GM13977 (cell line): ENCODE measurements at regions of chr1 and their contacts with region 1.

Region 1: DNA sequence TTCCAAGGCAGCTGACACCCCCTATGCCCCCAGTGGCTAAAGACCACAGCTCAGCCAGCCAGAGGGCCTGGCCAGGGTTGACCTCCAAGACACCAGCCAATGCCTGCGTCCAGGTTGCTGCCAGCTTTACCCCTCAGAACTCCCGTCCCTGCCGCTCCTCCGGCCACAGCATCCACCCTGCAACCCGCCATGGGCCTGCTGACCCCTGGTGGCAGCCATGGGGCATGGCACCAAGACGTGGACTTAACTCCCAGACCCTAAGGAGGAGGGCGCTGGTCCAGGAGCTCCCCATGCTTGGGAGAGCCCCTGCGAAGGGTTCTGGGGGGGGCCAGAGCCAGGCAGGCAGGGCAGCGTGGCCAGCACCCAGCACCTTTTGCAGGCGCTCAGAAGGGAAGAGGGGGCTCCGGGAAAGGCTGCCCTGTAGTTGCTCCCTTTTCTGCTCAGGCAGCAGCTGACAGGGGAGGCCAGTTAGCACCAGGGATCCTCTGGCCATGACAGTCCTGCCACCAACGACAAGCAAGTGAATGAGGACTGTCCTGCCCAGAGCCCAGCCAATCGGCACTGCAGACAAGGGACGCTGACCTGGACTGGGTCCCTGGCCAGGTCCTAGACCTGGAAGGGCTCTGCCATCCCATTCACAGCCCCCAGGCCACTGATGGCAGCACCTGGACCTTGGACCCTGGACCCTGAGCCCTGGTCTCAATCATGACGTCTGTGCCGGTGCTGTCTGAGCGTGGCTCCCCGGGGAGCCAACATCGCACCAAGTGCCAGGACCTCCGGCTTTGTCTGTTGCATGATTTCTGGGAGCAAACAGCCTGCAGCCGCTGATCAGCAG is 246.2 kb downstream of the NPHP4 start:
- DNase-seq: peak; percentile 88
- CTCF ChIP-seq: peak; percentile 99

Region 2: DNA sequence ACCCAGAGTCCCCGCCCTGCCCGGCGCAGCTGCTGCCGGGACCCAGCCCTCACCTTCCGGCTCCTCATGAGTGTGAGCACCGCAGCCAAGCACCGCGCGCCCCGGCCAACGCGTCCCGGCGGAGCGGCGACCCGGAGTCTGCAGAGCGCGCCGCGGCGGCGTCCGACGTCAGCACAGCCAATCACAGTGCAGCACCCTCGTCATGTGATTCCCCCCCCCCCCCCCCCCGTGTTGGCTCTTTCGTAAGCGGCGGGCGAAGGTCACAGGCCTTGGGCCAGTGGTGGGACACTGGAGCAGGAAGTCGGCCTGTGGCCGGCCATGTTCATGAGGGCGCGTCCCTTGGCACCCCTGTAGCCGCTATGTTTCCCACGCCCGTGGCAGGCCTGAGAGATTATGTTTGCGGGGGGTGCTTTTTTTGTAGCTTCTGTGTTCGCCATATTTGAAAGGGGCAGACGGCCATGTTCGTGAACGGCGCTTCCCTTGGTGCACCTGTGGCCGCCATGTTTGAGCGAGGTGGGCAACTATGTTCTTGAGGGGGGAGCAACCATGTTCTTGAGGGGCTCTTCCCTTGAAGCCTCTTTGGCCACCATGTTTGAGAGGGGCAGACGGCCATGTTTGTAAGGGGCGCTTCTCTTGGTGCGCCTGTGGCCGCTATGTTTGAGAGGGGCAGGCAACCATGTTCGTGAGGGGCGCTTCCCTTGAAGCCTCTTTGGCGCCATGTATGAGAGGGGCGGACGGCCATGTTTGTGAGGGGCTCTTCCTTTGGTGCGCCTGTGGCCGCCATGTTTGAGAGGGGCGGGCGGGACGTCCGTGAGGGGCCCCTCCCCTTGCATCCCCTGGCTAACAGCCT is 1845.6 kb before region 1 on chr1 and contains the start of gene C1orf174:
- in situ Hi-C with region 1: loop called (anchors 25 kb)
- DNase-seq: peak; percentile 95
- CTCF ChIP-seq: no peak

Region 3: DNA sequence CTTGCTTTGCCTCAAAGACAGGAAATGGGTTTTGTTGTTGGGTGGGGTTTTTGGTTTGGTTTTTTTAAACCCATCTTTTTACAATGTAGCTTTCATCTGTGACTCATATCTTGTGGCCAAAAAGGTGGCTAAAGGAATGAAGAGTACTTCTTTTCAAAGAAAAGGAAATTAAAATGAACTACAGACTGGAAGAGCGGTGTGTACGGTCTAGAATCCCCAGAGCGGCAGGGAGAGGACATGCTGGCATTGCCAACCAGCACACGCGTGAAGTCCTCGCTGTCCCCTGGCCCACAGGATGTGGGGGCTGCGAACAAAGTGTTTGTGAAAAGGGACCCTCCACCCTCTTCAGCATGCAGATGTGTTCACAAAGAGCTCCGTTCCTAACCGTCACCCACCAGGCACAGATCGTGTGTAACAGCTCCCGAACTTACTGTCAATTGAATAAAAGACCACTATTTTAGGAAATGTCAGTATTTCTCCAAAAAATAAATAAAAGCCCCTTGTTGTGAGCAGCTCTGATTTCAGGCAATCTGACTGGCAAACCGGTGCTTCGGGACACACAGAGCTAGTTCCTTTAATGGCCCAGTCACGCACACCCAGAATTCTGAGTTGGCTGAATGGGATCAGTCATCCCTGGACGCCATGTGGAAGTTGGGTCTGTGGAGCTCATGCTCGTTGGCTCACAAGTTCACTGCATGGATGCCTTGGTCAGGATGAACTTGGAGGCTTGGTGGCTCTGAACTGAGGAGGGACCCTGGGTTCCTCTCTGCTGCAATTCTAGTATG is 356.7 kb before region 1 on chr1:
- in situ Hi-C with region 1: no loop called
- DNase-seq: no peak
- CTCF ChIP-seq: no peak

Region 4: DNA sequence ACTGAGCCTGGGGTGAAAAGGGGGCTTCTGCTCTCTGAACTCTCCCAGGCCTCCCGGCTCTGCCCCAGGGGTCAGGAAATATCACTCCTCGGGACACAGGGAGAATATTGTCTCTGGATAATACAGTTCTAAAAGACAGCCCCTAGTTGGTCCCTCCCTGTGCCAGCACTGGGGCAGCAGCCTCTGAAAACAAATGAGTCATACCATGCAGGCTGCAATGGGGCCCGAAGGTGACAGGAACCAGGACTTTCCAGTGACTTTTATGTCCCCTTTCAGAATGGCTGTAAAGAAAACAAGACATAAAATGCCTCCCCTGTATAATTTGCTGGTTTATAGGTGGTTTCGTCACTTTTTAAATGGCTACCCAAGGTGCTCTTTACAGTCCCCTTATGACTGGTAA is 113.8 kb before region 1 on chr1:
- in situ Hi-C with region 1: no loop called
- DNase-seq: no peak
- CTCF ChIP-seq: no peak